ENCODE measurements at regions of chr14 and their contacts with region 1.

Region 1: GRCh38 chr14:57549765-57550420 is 56.2 kb upstream of the CCDC198 start:
- DNase-seq: no peak
- ATAC-seq: peak; percentile 70
- H3K4me3 ChIP-seq: no peak overlapping the region
- H3K27ac ChIP-seq: no peak overlapping the region
- H3K4me1 ChIP-seq: no peaks in the 10 kb centered on the region
- H3K27me3 ChIP-seq: no peaks in the 10 kb centered on the region
- CTCF ChIP-seq: no peak
- EP300 ChIP-seq: no peak
- POLR2A ChIP-seq: no peak
- RAD21 ChIP-seq: no peak

Region 2: DNA sequence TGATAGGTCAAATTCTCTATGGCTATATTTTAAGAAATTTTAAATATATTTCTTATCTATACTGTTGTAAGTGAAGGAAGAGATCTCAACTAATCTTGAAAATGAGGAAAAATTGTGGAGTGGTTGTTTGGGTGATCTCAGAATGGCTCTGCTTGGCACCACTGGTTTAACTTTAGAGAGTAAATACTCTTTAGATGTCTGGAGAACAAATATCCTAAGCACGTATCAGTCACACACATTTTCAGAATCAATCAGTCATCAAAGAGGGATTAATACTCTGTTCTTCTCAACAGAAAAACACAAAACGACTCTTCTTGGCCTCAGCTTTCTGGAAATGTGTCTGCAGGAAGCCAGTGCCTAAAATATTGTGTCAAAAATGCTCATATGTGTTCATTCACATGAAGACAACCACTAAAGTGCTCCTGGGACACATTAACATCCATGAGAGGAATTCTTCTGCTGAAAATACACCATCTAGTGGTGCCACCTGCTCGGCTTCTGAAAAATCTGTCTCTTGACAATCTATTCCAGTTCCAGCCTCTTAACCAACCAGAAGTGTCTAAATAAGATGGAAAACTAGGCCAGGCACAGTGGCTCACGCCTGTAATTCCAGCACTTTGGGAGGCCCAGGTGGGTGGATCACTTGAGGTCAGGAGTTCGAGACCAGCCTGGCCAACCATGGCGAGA is 24.9 kb after region 1 on chr14:
- CTCF ChIA-PET with region 1: interaction called, 14 read pairs
- POLR2A ChIA-PET with region 1: no interaction called
- RAD21 ChIA-PET with region 1: interaction called, 4 read pairs
- SMC1A ChIA-PET with region 1: interaction called, 14 read pairs
- in situ Hi-C with region 1: no loop called
- intact Hi-C with region 1: no loop called
- DNase-seq: no peak
- ATAC-seq: peak; percentile 44
- H3K4me3 ChIP-seq: no peak overlapping the region
- H3K27ac ChIP-seq: no peak overlapping the region
- H3K4me1 ChIP-seq: no peaks in the 10 kb centered on the region
- H3K27me3 ChIP-seq: no peaks in the 10 kb centered on the region
- CTCF ChIP-seq: peak in 1 of 3 experiments; percentile 37; a peak in 1 of 6 replicates
- EP300 ChIP-seq: no peak
- POLR2A ChIP-seq: no peak
- RAD21 ChIP-seq: no peak

Region 3: DNA sequence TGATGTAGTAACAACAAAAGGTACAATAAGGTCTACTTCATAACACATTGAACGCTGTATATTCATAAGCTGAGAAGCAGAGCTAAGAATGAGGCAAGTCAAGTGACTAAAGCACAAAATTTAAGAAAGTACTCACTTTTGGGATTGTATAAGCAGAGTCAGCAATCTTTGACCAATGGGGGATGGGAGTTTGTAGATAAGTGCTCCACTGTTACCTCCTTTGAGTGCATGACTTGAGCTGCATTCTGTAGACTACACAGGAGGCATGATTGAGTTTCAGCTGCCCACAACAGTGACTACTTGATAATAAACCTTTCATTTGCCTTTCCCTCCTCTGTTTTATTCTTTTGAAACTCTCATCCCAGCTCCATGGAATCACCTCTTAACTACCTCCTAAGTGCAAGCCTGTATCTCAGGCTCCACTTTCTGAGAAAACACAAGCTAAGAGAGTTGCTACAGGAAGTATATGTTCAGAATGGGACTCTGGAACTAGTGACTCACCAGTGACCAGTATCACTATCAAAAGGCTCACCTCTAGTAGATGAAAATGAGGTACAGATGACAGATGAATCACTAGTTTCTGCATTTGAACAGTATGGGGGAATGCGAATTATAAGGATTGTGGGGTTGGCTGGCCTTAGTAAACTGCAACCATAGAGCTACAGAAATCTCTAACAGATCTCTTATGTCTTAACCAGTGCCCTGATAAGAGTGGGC is 266.8 kb after region 1 on chr14:
- CTCF ChIA-PET with region 1: no interaction called
- POLR2A ChIA-PET with region 1: no interaction called
- RAD21 ChIA-PET with region 1: no interaction called
- SMC1A ChIA-PET with region 1: no interaction called
- in situ Hi-C with region 1: no loop called
- intact Hi-C with region 1: no loop called
- DNase-seq: no peak
- ATAC-seq: peak; percentile 66
- H3K4me3 ChIP-seq: no peak overlapping the region
- H3K27ac ChIP-seq: no peak overlapping the region
- H3K4me1 ChIP-seq: no peaks in the 10 kb centered on the region
- H3K27me3 ChIP-seq: no peaks in the 10 kb centered on the region
- CTCF ChIP-seq: no peak
- EP300 ChIP-seq: no peak
- POLR2A ChIP-seq: no peak
- RAD21 ChIP-seq: no peak

Measured in GM12878 (cell line).